ENCODE measurements at regions of chr2 and their contacts with region 1.

Region 1: DNA sequence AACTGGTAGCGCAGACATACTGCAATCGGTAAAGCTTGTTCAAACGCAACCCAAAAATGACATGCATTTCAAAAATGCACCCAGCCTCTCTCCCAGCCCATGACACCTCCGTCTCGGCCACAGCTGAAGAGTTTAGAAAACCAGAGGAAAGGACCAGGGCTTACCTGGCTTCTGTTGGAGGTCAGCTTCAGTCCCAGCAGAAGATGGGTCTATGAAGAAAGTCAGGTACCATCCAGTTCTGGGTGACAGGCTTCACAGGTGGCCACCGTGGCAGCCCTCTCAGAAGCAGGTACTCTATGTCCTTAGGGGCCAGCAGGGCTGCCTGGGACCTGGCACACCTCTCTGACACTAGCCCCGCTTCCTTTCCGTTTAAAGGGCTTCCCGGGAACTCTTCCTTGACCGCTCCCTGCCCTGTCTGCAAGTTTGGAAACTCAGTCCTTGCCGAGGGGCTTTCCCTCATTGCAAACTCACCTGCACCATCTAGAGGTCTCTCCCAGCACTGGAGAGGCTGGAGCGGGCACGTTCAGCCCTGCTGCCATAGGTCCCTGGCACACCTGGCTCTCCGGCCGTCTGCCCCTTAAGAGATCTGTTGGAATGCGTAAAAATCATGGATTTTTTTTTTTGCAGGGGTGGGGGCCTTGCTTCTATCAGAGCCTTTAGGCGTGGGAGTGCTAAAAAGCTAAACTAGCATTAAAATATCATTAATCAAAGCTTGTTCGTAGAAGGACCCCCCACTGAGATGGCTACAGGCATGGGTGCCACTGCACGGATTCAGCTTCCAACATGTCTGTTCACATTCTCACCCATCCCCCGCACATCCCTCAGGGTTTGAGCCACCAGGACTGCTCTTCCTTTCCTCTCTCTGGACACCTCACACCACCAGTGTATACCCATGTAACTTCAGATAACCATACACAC is at the start of gene EDAR:
- DNase-seq: peak; percentile 4
- H3K4me3 ChIP-seq: no peak within 1 kb of the TSS
- H3K27ac ChIP-seq: no peak within 1 kb of the TSS
- H3K4me1 ChIP-seq: no peaks in the 10 kb centered on the region
- CTCF ChIP-seq: peak; percentile 53
- total RNA-seq, gene EDAR: not detected in 2 replicates

Region 2: DNA sequence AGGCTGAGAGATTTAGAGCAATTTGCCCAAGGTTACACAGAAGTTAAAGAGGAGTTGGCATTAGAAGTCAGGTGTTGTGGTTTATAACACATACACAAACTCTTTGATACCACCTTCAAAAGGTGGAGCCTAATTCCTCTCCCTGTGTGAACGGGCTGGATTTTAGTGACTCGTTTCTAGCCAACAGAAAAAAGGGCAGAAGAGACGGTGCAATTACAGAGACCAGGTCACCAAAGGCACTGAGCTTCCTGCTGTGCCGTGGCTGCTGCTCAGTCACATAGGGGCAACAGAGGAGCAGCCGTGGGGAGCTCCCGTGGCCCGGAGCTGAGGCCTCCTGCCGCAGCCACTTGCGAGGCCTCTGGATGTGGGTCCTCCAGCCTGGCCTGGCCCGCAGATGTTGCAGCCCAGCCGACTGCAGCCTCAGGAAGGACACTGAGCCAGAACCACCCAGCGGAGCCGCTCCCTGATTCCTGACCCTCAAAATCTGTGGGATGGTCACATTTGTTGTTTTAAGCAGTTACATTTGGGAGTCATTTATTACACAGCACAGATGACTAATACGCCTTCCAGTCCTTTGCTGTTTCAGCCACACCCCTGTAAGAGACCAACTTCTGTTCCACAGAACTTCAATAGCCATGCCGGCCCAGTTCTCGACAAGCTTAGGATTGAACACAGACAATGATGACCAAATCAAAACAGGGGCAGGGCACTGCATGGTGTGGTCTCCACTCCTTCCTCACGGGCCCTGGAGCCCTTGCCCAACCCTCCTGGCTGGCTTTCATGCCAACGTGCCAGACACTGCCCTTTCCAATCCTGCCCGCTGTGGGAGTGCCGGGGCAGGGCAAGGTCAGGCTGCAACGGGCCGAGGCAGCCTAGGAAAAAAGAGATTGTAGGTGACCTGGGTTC is 17.1 kb before region 1 on chr2:
- CTCF ChIA-PET with region 1: no interaction called
- POLR2A ChIA-PET with region 1: no interaction called
- intact Hi-C with region 1: loop called (anchors 1 kb)
- DNase-seq: no peak
- H3K4me3 ChIP-seq: no peak overlapping the region
- H3K27ac ChIP-seq: no peak overlapping the region
- H3K4me1 ChIP-seq: no peaks in the 10 kb centered on the region
- CTCF ChIP-seq: no peak

Region 3: DNA sequence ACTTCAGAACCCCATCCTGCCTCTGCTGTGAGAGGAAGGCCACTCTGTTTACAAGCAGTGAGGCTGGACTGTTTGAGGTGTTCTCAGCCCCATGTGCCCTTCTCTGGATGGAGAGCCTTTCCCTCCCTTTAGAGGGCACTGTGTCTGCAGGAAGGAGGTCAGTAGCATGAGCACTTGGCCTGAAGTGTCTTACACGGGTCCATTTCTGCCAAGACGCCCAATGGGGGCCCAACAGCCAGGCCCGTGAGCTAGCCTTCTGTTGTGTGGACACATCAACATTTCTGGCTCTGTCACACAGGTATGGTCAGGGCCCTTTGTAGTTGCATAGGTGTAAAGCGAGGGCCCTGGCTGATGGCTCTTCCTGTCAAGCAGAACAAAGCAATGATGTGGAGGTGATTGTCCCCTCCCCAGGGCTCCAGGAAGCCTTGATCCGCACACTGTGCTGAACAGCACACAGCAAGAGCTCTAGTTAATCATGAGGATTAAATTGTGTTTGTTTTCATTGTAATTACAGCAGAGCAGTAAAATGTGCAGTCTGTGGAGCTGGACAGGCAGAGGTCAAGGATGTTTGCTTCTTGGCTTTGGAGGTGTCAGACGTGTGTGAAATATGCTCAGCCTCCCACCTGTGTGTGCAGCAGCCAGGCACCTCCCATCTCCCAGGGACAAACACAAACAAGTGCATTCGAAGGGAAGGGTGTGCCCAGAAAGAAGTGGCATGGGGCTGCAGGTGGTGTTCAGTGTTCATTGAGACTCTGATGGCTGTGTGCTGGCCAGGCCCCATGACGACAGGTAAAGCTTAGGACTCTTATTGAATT is 272.0 kb after region 1 on chr2:
- CTCF ChIA-PET with region 1: no interaction called
- POLR2A ChIA-PET with region 1: no interaction called
- intact Hi-C with region 1: no loop called
- DNase-seq: no peak
- H3K4me3 ChIP-seq: no peak overlapping the region
- H3K27ac ChIP-seq: no peak overlapping the region
- H3K4me1 ChIP-seq: peaks cover 2% of the 10 kb centered on the region
- CTCF ChIP-seq: no peak; the same call in 1 of the 2 replicates